ENCODE measurements at regions of chr6 and their contacts with region 1.

Region 1: GRCh38 chr6:17987576-17988421 is at the start of gene KIF13A:
- DNase-seq: peak; percentile 45 to 94 (median 60)

Region 2: DNA sequence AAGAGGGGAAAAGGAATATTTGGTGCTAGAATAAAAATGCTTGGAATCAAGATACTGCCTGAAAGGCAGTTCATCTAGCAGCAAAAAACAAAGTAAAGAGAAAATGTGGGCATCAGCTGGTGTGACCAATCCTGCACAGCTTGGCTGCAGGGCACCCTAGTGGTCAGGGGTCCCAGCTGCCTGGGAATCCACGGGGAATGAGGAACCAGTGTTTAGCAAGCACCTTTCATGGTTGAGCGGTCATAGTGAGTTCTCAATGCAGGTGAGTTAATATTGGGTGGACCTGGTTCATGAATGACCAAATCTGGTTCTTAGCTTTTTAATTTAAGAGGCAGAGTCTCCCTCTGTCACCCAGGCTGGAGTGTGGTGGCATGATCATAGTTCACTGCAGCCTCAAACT is 541.1 kb before region 1 on chr6:
- intact Hi-C with region 1: no loop called
- DNase-seq: no peak

Region 3: GRCh38 chr6:17706580-17707370 is 281.0 kb before region 1 on chr6 and contains the start of gene NUP153:
- intact Hi-C with region 1: loop called (anchors 5 kb)
- DNase-seq: peak; percentile 98 to 100 (median 99)

Region 4: GRCh38 chr6:17831135-17831534 is 156.7 kb before region 1 on chr6:
- intact Hi-C with region 1: loop called (anchors 10 kb)
- DNase-seq: no peak

Region 5: GRCh38 chr6:17865798-17866725 is 121.7 kb before region 1 on chr6:
- intact Hi-C with region 1: loop called (anchors 2 kb)
- DNase-seq: peak; percentile 45 to 95 (median 63)

Region 6: DNA sequence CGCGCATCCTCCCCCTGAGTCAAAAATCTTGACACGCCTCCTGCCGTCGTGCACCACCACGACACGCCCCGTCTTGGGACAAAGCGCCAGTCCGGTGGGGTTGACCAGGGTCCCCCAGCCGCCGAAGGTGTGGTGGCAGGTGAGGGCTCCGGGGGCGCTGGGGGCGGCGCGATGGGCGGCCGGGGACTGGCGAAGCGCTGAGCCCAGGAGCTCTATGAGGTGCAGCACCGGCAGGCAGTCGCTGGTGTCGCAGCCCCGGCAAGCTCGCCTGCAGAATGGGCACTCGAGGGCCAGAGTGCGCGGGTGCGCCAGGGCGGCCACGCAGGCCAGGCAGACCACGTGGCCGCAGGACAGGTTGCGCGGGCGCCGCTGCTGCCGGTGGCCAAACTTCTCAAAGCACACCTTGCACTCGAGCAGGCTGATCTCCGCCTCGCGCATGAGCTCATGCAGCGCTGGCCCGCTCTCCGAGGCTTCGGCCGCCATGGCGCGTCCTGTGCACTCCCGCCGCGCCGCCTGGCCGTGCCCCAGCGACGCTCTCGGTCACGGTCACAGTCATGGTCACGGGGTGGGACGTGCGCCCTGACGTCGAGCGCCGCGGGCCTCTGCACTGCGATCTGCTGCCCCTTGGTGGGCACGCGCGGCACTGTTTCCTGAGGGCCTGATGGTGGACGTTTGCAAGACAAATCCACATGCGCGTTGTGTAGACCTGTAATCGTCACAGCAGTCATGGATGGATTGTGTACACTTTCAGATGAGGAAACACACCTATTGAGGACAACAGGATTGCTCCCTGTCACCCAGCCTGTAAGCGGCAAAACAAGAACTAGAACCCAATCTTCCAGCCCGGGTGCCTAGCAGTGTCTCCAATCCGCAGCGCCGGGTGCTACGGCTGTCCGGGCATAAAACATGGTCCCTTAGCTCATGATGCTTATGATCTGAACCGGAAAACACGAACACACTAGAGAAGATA is 134.6 kb after region 1 on chr6 and contains the start of gene NHLRC1:
- intact Hi-C with region 1: loop called (anchors 2 kb)
- DNase-seq: peak; percentile 81 to 98 (median 89)

Region 7: GRCh38 chr6:18155150-18155863 is 167.5 kb after region 1 on chr6 and contains the start of gene KDM1B:
- intact Hi-C with region 1: loop called (anchors 10 kb)
- DNase-seq: peak; percentile 98 to 100 (median 99)

Region 8: DNA sequence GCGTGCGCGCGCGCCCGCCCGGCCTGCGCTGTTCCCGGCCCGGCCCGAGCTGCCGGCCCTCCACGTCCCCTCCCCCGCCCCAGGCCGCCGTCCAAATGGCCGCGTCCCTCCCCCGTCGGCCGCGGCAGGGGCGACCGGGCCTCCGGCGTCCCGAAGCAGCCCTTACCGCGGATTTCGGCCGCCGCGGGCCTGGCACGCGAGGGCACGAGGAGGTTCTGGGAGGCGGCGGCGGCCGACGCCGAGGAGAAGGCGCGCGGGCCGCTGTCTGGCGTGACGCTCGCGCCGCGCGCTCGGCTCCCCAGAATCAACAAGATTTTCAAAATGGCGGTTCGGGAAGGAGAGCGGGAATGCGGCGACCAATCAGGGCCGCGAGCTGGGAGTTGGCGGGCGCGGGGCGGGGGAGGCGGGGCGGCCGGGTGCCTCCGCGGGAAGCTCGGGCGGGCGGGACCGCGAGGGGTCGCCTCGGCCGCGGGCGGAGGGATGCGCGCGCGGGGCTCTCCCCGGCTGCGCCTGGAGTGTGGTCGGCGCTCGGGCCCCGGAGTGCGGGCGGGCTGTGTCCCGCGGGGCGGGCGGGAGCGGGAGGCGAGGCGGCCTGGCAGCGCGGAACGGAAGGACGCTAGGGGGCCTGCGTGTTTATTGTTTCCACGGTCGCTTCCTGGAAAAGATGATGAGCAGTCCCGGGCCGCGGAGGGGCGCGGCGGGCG is 276.6 kb after region 1 on chr6 and contains the start of gene DEK:
- intact Hi-C with region 1: loop called (anchors 5 kb)
- DNase-seq: peak; percentile 78 to 97 (median 84)